PC-9 (cell line): ENCODE measurements at regions of chr1 and their contacts with region 1.

Region 1: GRCh38 chr1:68081775-68082283 is 31.4 kb upstream of the DIRAS3 start:
- DNase-seq: no peak
- H3K4me3 ChIP-seq: no peak overlapping the region
- H3K27ac ChIP-seq: no peak overlapping the region
- H3K4me1 ChIP-seq: no peaks in the 10 kb centered on the region
- H3K27me3 ChIP-seq: no peaks in the 10 kb centered on the region
- CTCF ChIP-seq: no peak

Region 2: DNA sequence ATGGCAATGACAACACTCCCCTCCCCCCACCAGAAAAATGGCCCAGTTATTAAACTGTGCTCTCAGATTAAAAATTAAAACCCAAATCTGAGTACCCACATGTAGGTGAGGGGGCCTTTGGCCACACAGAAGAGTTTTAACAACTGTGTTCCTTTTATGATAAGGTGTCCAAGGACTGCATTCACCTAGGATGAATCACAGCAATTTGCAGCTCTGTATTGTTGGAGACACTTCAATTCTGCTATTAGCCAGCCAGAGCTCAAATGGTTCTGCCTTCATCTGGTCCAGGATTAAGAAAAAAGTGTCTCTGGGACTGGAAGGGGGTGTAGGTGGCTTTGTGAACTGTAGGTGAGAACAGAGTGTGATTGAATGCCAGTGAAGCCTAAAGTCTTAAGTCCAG is 11.9 kb after region 1 on chr1:
- CTCF ChIA-PET with region 1: interaction called, 17 read pairs
- POLR2A ChIA-PET with region 1: no interaction called
- intact Hi-C with region 1: no loop called
- DNase-seq: no peak
- H3K4me3 ChIP-seq: no peak overlapping the region
- H3K27ac ChIP-seq: no peak overlapping the region
- H3K4me1 ChIP-seq: no peaks in the 10 kb centered on the region
- H3K27me3 ChIP-seq: no peaks in the 10 kb centered on the region
- CTCF ChIP-seq: no peak